Activated CD4-positive, alpha-beta memory T cell treated with anti-CD3 and anti-CD28 coated beads, Interleukin-2, amount 10 ng/mL, durations not matched to agents 7 days and 5 days (primary cell): ENCODE measurements at regions of chr6 and their contacts with region 1.

Region 1: DNA sequence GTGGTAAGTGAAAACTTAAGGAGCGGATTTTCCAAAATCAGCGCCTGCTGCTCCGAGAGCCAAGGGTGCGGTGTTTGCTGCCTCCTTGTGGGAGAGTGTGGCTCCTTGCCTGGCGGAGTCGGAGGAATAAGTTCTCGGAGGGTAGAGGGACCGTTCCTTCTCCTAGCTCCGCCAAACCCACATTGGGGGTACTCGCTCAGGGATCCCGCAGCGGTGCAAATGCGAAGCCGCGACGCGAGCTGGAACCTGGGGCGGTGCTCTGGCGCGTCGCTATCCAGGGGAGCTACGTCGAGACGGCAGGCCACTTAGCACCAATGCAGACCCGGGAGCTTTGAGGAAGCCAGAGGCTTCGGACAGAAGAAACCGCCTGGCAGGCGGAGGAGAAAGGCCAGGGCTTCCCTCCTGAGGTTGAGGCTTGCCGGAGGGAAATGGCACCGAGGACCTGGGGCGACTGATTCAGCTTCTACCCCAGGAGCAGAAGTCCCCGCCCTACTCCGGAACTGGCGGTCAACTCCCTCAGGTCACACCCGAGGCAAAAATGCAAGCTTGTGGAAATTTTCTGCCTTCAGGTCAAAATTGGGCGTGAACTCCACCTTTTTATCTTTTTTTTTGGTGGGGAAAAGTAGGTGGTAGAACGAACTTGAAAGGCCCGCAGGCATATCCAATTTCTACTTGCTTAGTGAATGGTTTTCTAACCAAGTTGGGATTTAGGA is 5.7 kb upstream of the DDX43 start:
- DNase-seq: peak; percentile 84
- H3K4me3 Mint-ChIP-seq: peak overlapping the region; percentile 80
- H3K27ac Mint-ChIP-seq: peak overlapping the region; percentile 89
- H3K4me1 Mint-ChIP-seq: peaks cover 37% of the 10 kb centered on the region
- H3K27me3 Mint-ChIP-seq: no peaks in the 10 kb centered on the region

Region 2: GRCh38 chr6:73377225-73377624 is 11.7 kb before region 1 on chr6:
- CTCF ChIA-PET with region 1: interaction called, 14 read pairs
- POLR2A ChIA-PET with region 1: interaction called, 5 read pairs
- DNase-seq: no peak
- H3K4me3 Mint-ChIP-seq: no peak overlapping the region
- H3K27ac Mint-ChIP-seq: no peak overlapping the region
- H3K4me1 Mint-ChIP-seq: no peaks in the 10 kb centered on the region
- H3K27me3 Mint-ChIP-seq: no peaks in the 10 kb centered on the region

Region 3: GRCh38 chr6:73421534-73421933 is 32.6 kb after region 1 on chr6:
- CTCF ChIA-PET with region 1: interaction called, 4 read pairs
- POLR2A ChIA-PET with region 1: interaction called, 25 read pairs
- DNase-seq: no peak
- H3K4me3 Mint-ChIP-seq: no peak overlapping the region
- H3K27ac Mint-ChIP-seq: peak overlapping the region; percentile 98
- H3K4me1 Mint-ChIP-seq: peaks cover 44% of the 10 kb centered on the region
- H3K27me3 Mint-ChIP-seq: no peaks in the 10 kb centered on the region

Region 4: DNA sequence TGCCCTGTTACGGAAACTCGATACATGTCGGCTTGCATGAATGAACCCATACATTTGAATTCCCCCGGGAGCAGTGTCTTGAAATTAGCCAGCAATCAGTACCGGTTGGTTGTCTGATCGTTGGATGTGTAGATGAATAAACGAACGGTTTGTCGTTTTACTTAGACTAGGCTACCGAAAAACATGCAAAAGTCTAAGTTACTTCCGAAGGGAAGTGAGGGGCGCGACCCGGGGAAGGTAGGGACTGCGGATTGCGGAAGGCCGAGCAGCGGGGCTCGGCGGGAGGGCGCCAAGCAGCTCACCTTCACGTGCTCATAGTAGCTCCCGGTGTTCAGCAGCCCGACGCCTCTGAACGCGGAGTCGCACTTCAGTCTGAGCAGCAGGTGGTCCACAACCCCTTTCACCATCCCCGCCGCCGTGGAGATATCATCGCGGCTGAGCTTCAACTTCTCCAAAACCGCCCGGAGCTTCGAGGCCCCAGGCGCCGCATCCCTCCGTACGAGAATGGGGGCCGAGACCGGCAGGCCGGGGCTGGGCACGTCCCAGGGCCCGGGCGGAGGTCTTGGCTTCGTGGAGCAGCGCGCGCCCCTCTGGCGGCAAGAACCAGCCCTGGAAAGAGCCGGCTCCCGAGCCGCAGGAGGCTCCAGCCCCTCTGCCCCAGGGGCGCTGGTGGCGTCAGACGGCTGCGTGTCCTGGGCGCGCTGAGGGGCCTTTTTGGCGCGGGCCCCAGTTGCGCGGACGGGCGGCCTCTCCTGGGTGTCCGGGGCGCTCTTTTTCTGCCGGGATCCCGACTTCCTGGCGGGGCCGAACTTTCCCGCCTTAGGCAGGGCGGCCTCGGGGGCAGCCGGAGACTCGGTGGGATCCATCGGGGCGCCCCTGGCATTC is 62.5 kb after region 1 on chr6:
- CTCF ChIA-PET with region 1: interaction called, 5 read pairs
- POLR2A ChIA-PET with region 1: interaction called, 29 read pairs
- DNase-seq: peak; percentile 57
- H3K4me3 Mint-ChIP-seq: peak overlapping the region; percentile 95
- H3K27ac Mint-ChIP-seq: peak overlapping the region; percentile 86
- H3K4me1 Mint-ChIP-seq: peaks cover 50% of the 10 kb centered on the region
- H3K27me3 Mint-ChIP-seq: no peaks in the 10 kb centered on the region